Mammary epithelial cell (primary cell): ENCODE measurements at regions of chr10 and their contacts with region 1.

Region 1: GRCh38 chr10:29517352-29517923 is 117.3 kb downstream of the SVIL start:
- DNase-seq: no peak
- H3K4me3 ChIP-seq: no peak overlapping the region
- H3K27ac ChIP-seq: no peak overlapping the region
- H3K4me1 ChIP-seq: peaks cover 4% of the 10 kb centered on the region
- H3K27me3 ChIP-seq: no peaks in the 10 kb centered on the region
- CTCF ChIP-seq: peak; percentile 52 to 54

Region 2: GRCh38 chr10:29083096-29083495 is 434.3 kb before region 1 on chr10:
- CTCF ChIA-PET with region 1: no interaction called
- dilution Hi-C with region 1: no loop called
- in situ Hi-C with region 1: no loop called
- intact Hi-C with region 1: no loop called
- DNase-seq: no peak
- H3K4me3 ChIP-seq: no peak overlapping the region
- H3K27ac ChIP-seq: no peak overlapping the region
- H3K4me1 ChIP-seq: no peaks in the 10 kb centered on the region
- H3K27me3 ChIP-seq: no peaks in the 10 kb centered on the region
- CTCF ChIP-seq: no peak

Region 3: GRCh38 chr10:29377333-29377961 is 140.0 kb before region 1 on chr10:
- CTCF ChIA-PET with region 1: no interaction called
- dilution Hi-C with region 1: no loop called
- in situ Hi-C with region 1: no loop called
- intact Hi-C with region 1: loop called (anchors 1 kb)
- DNase-seq: peak; percentile 8
- H3K4me3 ChIP-seq: no peak overlapping the region
- H3K27ac ChIP-seq: no peak overlapping the region
- H3K4me1 ChIP-seq: no peaks in the 10 kb centered on the region
- H3K27me3 ChIP-seq: no peaks in the 10 kb centered on the region
- CTCF ChIP-seq: peak; percentile 75 to 76

Region 4: DNA sequence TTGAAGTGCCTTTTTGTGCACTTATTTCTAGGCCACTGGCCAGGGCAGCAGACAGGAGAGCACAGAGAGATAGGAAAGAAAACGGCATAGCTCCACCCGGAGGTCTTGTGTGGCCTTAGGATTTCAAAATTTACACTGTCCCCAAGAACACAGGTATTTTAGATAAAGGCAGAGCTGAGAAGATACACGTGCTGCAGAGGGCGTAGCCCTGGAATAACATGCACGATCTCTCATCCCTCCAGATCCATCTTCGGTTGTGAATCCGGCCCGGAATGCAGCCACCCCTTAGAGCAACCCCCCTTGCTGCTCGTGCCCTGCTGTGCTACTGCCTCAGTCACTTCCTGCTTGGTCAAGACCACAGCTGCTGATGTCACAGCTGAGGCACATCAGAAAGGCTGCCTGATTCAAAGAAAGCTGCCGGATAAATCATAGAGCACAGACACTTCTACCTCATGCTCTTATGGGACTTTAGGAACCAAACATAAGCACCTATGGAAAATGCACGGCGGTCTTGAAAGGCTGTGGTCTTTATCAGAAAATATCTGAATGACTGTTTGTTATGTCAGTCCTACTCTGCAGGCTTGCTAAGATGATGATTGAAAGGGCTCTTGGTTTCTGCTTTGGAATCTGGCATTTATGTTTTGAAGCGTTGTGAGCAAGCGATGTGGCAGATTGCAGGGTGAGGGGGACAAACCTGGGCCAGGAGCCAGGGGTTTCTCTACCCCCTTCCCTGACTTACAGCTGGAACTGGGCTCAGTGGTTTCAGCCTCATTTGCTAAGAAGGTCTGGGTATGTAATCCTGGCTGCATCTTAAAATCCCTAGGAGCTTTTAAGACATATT is 34.6 kb before region 1 on chr10:
- CTCF ChIA-PET with region 1: no interaction called
- dilution Hi-C with region 1: no loop called
- in situ Hi-C with region 1: no loop called
- intact Hi-C with region 1: loop called (anchors 2 kb)
- DNase-seq: no peak
- H3K4me3 ChIP-seq: no peak overlapping the region
- H3K27ac ChIP-seq: no peak overlapping the region
- H3K4me1 ChIP-seq: peaks cover 24% of the 10 kb centered on the region
- H3K27me3 ChIP-seq: no peaks in the 10 kb centered on the region
- CTCF ChIP-seq: no peak

Region 5: GRCh38 chr10:29590915-29591650 is 73.6 kb after region 1 on chr10:
- CTCF ChIA-PET with region 1: no interaction called
- dilution Hi-C with region 1: no loop called
- in situ Hi-C with region 1: no loop called
- intact Hi-C with region 1: loop called (anchors 2 kb)
- DNase-seq: no peak
- H3K4me3 ChIP-seq: no peak overlapping the region
- H3K27ac ChIP-seq: peak overlapping the region; percentile 100
- H3K4me1 ChIP-seq: peaks cover 36% of the 10 kb centered on the region
- H3K27me3 ChIP-seq: no peaks in the 10 kb centered on the region
- CTCF ChIP-seq: no peak